ENCODE measurements at regions of chr5 and their contacts with region 1.

Region 1: GRCh38 chr5:111655169-111655924 is 101.6 kb downstream of the NREP start:
- DNase-seq: peak in 1 of 2 donors; percentile 69
- H3K4me3 ChIP-seq: no peak overlapping the region
- H3K27ac ChIP-seq: peak overlapping the region in 1 of 2 donors; percentile 49
- H3K4me1 ChIP-seq: peaks cover 0 to 5% of the 10 kb centered on the region in 2 donors
- H3K27me3 ChIP-seq: no peaks in the 10 kb centered on the region
- CTCF ChIP-seq: no peak

Region 2: GRCh38 chr5:111135946-111136345 is 519.4 kb before region 1 on chr5:
- intact Hi-C with region 1: no loop called
- DNase-seq: no peak
- H3K4me3 ChIP-seq: no peak overlapping the region
- H3K27ac ChIP-seq: no peak overlapping the region
- H3K4me1 ChIP-seq: no peaks in the 10 kb centered on the region
- H3K27me3 ChIP-seq: no peaks in the 10 kb centered on the region
- CTCF ChIP-seq: no peak

Region 3: GRCh38 chr5:111550279-111551020 is 104.9 kb before region 1 on chr5:
- intact Hi-C with region 1: loop called (anchors 2 kb)
- DNase-seq: peak; percentile 48 to 95
- H3K4me3 ChIP-seq: no peak overlapping the region
- H3K27ac ChIP-seq: no peak overlapping the region
- H3K4me1 ChIP-seq: peaks cover 0 to 4% of the 10 kb centered on the region in 2 donors
- H3K27me3 ChIP-seq: no peaks in the 10 kb centered on the region
- CTCF ChIP-seq: peak; percentile 53 to 76 (median 75)

Region 4: DNA sequence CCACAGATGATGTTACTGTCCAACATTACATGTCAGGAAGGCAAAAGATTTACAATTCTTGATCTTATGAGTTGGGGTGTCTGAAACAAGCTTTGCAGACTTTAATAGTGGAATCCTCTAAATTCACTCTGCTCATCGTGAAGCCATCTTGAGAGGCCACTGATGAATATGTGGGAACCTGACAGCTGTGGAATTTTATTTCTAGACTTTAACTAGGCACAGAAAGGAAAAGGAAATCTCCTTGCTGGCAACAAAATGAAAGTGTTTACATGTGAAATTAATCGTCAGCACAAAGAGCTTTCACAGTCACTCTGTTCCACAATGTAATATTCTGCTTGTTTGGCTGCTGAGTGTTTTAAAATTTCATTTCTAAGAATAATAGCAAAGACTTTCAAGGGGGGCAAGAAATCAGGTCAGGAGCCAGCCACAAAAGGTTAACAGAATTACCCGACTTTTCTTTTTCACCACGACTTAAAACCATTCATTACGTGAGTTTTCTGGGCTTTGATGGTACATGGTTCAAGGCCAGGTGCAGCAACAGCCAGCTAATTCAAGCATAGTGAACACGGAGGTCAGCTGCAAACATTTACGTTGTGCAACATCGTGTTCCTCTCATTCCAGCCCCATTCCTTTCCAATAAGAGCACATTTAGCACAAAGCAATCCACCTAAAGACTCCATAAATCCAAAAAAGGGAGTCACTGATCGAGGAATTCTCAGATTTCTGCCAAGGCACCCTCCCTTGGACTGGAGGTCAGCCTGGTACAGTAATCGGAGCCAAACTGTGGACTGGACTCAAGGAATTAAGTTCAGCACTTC is 87.0 kb after region 1 on chr5:
- intact Hi-C with region 1: loop called (anchors 5 kb)
- DNase-seq: peak in 1 of 2 donors; percentile 66
- H3K4me3 ChIP-seq: peak overlapping the region; percentile 12 to 44
- H3K27ac ChIP-seq: peak overlapping the region in 1 of 2 donors; percentile 44
- H3K4me1 ChIP-seq: peaks cover 7 to 25% of the 10 kb centered on the region in 2 donors
- H3K27me3 ChIP-seq: no peaks in the 10 kb centered on the region
- CTCF ChIP-seq: no peak